B cell (primary cell): ENCODE measurements at regions of chr17 and their contacts with region 1.

Region 1: GRCh38 chr17:75524953-75525719 is at the start of gene LLGL2:
- DNase-seq: peak; percentile 92
- ATAC-seq: peak; percentile 92
- H3K4me3 ChIP-seq: peak within 1 kb of the TSS; percentile 35 to 80 (median 74)
- H3K4me3 Mint-ChIP-seq: peak within 1 kb of the TSS; percentile 89
- H3K27ac ChIP-seq: peak within 1 kb of the TSS in 1 of 2 donors; percentile 24
- H3K27ac Mint-ChIP-seq: no peak within 1 kb of the TSS
- H3K4me1 ChIP-seq: peaks cover 15 to 18% of the 10 kb centered on the region in 2 donors
- H3K4me1 Mint-ChIP-seq: peaks cover 14% of the 10 kb centered on the region
- H3K27me3 ChIP-seq: peaks cover 0 to 7% (median 0%) of the 10 kb centered on the region in 4 experiments
- H3K27me3 Mint-ChIP-seq: no peaks in the 10 kb centered on the region
- CTCF ChIP-seq: peak; percentile 47
- total RNA-seq, gene LLGL2: 39.7 and 40.6 TPM in 2 replicates

Region 2: DNA sequence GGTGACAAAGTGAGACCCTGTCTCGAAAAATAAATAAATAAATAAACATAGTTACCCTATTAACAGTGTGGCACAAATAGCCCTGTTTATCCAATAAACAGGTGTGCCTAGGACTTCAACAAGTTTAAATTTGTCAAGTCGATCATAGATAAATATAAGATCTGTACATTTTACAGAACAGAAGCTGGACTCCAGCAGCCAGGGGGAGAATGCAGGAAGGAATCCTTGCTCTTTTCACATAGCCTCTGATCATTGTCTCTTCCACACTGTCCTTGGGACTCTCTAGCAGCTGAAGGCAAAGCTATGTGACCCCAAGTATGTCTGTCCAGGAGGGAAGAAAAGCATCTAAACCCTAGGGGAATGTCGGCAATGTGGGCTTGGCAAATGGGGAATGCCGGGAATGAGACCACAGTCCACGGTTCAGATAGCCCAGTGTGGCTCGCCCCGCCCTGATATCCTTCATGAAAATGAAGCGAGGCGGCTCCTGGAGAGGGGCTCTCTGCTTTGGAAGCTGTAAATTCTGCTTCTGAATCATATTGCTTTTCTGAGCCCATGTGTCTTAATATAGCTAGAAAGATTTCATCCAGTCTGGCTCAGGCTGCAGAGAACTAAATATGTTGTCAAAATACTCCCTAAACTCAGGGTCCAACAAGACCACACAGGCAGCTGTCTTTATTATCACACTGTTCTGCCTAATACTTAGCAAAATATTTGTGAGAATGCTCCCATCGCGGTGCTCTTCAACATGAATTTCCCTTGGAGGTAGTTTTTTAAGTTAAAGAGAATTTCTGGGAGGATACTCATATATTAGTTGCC is 94.8 kb before region 1 on chr17:
- CTCF ChIA-PET with region 1: interaction called, 4 read pairs
- POLR2A ChIA-PET with region 1: interaction called, 3 read pairs
- intact Hi-C with region 1: loop called (anchors 2 kb)
- DNase-seq: no peak
- ATAC-seq: no peak
- H3K4me3 ChIP-seq: no peak overlapping the region
- H3K4me3 Mint-ChIP-seq: no peak overlapping the region
- H3K27ac ChIP-seq: no peak overlapping the region
- H3K27ac Mint-ChIP-seq: no peak overlapping the region
- H3K4me1 ChIP-seq: peaks cover 6 to 7% of the 10 kb centered on the region in 2 donors
- H3K4me1 Mint-ChIP-seq: peaks cover 11% of the 10 kb centered on the region
- H3K27me3 ChIP-seq: peaks cover 0 to 4% (median 0%) of the 10 kb centered on the region in 4 experiments
- H3K27me3 Mint-ChIP-seq: peaks cover 15% of the 10 kb centered on the region
- CTCF ChIP-seq: no peak

Region 3: GRCh38 chr17:75456417-75457046 is 68.6 kb before region 1 on chr17 and contains the start of gene TMEM94:
- CTCF ChIA-PET with region 1: no interaction called
- POLR2A ChIA-PET with region 1: no interaction called
- intact Hi-C with region 1: loop called (anchors 2 kb)
- DNase-seq: peak; percentile 97
- ATAC-seq: peak; percentile 98
- H3K4me3 ChIP-seq: peak within 1 kb of the TSS; percentile 75 to 99 (median 84)
- H3K4me3 Mint-ChIP-seq: peak within 1 kb of the TSS; percentile 96
- H3K27ac ChIP-seq: peak within 1 kb of the TSS; percentile 60 to 79
- H3K27ac Mint-ChIP-seq: peak within 1 kb of the TSS; percentile 88
- H3K4me1 ChIP-seq: peaks cover 14 to 20% of the 10 kb centered on the region in 2 donors
- H3K4me1 Mint-ChIP-seq: peaks cover 42% of the 10 kb centered on the region
- H3K27me3 ChIP-seq: no peaks in the 10 kb centered on the region
- H3K27me3 Mint-ChIP-seq: no peaks in the 10 kb centered on the region
- CTCF ChIP-seq: no peak
- total RNA-seq, gene TMEM94: 112 and 139 TPM in 2 replicates

Region 4: GRCh38 chr17:75504347-75504964 is 20.7 kb before region 1 on chr17:
- CTCF ChIA-PET with region 1: interaction called, 10 read pairs
- POLR2A ChIA-PET with region 1: no interaction called
- intact Hi-C with region 1: no loop called
- DNase-seq: peak; percentile 73
- ATAC-seq: peak; percentile 90
- H3K4me3 ChIP-seq: no peak overlapping the region
- H3K4me3 Mint-ChIP-seq: no peak overlapping the region
- H3K27ac ChIP-seq: no peak overlapping the region
- H3K27ac Mint-ChIP-seq: no peak overlapping the region
- H3K4me1 ChIP-seq: peaks cover 0 to 7% of the 10 kb centered on the region in 2 donors
- H3K4me1 Mint-ChIP-seq: no peaks in the 10 kb centered on the region
- H3K27me3 ChIP-seq: no peaks in the 10 kb centered on the region
- H3K27me3 Mint-ChIP-seq: no peaks in the 10 kb centered on the region
- CTCF ChIP-seq: peak; percentile 67

Region 5: DNA sequence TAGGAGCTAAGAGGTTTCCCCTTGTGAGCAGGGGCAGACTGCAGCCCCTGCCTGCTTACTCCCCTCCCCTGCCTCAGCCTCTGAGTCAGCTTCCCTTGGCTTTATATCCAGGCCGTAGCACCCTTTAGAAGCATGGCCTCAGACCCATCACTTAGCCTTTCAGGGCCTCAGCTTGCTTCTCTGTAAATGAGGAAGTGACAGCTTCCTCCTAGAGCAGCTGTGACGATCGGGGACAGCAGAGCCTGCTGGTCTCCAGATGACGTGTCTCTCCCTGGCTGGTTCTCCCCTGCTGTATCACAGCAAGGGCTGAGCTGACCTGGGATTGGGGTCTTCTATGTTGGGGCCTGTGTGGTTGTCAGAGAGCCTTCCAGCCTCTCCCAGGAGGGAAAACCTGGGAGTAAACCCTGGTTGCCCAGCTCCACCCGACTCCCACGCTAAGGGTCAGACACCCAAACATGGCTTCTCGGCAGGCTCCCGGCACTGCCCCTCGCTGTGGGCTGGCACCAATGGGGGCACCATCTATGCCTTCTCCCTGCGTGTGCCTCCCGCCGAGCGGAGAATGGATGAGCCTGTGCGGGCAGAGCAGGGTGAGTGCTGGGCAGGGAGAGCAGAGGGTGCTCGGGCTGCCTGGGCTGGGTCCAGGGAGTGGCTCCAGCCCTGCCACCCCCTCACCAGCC is 46.2 kb after region 1 on chr17:
- CTCF ChIA-PET with region 1: interaction called, 6 read pairs
- POLR2A ChIA-PET with region 1: interaction called, 3 read pairs
- intact Hi-C with region 1: loop called (anchors 1 kb)
- DNase-seq: peak; percentile 88
- ATAC-seq: peak; percentile 97
- H3K4me3 ChIP-seq: peak overlapping the region in 2 of 5 experiments; percentile 28 to 35
- H3K4me3 Mint-ChIP-seq: peak overlapping the region; percentile 71
- H3K27ac ChIP-seq: peak overlapping the region; percentile 80 to 93
- H3K27ac Mint-ChIP-seq: peak overlapping the region; percentile 96
- H3K4me1 ChIP-seq: peaks cover 24 to 28% of the 10 kb centered on the region in 2 donors
- H3K4me1 Mint-ChIP-seq: peaks cover 23% of the 10 kb centered on the region
- H3K27me3 ChIP-seq: no peaks in the 10 kb centered on the region
- H3K27me3 Mint-ChIP-seq: no peaks in the 10 kb centered on the region
- CTCF ChIP-seq: no peak